Kidney (tissue), 22 donors: ENCODE measurements at regions of chr18 and their contacts with region 1.

Region 1: GRCh38 chr18:830315-830901 is 18.4 kb upstream of the YES1 start:
- DNase-seq: peak in 1 of 5 donors; percentile 71
- H3K4me3 ChIP-seq: no peak overlapping the region
- H3K27ac ChIP-seq: peak overlapping the region in 1 of 2 donors; percentile 61
- H3K4me1 ChIP-seq: peaks cover 0 to 2% (median 0%) of the 10 kb centered on the region in 3 donors
- H3K27me3 ChIP-seq: no peaks in the 10 kb centered on the region
- CTCF ChIP-seq: no peak

Region 2: GRCh38 chr18:741931-742512 is 88.4 kb before region 1 on chr18:
- intact Hi-C with region 1: loop called (anchors 5 kb)
- DNase-seq: peak in 2 of 5 donors; percentile 26 to 53
- H3K4me3 ChIP-seq: no peak overlapping the region
- H3K27ac ChIP-seq: no peak overlapping the region
- H3K4me1 ChIP-seq: no peaks in the 10 kb centered on the region
- H3K27me3 ChIP-seq: no peaks in the 10 kb centered on the region
- CTCF ChIP-seq: peak; percentile 76

Region 3: GRCh38 chr18:887716-888115 is 57.3 kb after region 1 on chr18:
- intact Hi-C with region 1: no loop called
- DNase-seq: no peak
- H3K4me3 ChIP-seq: no peak overlapping the region
- H3K27ac ChIP-seq: no peak overlapping the region
- H3K4me1 ChIP-seq: no peaks in the 10 kb centered on the region
- H3K27me3 ChIP-seq: no peaks in the 10 kb centered on the region
- CTCF ChIP-seq: no peak

Region 4: DNA sequence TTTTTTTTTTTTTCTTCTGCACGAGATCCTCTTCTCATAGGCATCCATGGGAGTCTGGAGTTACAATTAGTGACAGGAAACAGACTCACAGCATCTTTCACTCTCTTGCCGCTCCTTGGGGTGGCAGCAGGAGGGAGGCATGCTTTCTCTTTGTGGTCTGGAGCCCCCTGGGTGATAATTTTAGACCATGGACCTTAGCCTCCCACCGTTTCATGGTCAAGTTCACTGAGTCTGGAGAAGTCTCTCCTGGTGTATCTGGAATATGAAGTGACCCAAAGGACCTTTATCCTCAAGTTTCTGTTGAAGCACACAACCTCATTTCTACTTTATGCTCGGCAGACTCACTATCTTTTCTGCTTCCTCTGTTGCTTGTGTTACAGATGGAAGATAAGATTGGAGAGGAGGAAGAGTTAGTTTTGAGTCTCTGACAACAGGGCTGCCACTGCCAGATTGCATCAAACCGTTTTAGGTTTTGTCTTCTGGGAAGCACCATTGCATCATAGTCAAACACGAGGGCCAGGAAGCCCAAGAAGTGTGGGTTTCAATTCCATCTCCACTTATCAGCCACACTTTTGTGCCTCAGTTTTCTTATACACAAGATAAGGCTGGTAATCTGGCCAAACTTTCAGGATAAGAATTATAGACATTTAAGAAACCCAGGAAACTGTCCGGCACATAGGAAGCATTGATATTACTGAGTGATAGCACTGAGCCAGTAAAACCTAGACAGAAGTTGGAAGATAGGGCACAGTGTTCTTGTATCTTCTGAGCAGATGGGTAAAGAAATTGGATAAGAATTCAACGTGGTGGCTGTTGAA is 136.6 kb after region 1 on chr18:
- intact Hi-C with region 1: no loop called
- DNase-seq: no peak
- H3K4me3 ChIP-seq: no peak overlapping the region
- H3K27ac ChIP-seq: no peak overlapping the region
- H3K4me1 ChIP-seq: no peaks in the 10 kb centered on the region
- H3K27me3 ChIP-seq: peaks cover 2% of the 10 kb centered on the region
- CTCF ChIP-seq: no peak

Region 5: DNA sequence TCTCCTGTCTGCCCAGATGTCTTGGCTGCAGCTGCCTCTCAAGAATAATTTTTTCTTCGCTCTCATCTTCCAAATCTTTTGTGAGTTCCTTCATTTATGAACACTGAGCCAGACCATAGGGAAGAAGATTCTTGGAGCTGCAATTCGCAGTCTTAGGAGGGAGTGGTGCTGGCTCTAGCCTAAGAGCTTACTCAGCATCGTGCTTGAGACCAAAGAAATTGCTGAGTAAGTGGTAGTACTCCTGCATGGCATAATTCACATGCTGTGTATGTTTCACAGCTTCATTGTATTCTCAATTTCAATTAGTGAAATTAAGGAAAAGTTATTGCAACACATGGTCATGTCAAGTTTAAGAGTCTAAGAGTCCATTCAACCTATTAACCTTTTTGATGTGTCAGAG is 846.0 kb after region 1 on chr18:
- intact Hi-C with region 1: no loop called
- DNase-seq: no peak
- H3K4me3 ChIP-seq: no peak overlapping the region
- H3K27ac ChIP-seq: no peak overlapping the region
- H3K4me1 ChIP-seq: no peaks in the 10 kb centered on the region
- H3K27me3 ChIP-seq: no peaks in the 10 kb centered on the region
- CTCF ChIP-seq: no peak